HAP-1 (cell line): ENCODE measurements at regions of chrX and their contacts with region 1.

Region 1: GRCh38 chrX:117645639-117646038 is 471.0 kb downstream of the KLHL13 start:
- DNase-seq: no peak
- H3K4me3 ChIP-seq: no peak overlapping the region
- H3K4me1 ChIP-seq: no peaks in the 10 kb centered on the region
- H3K27me3 ChIP-seq: no peaks in the 10 kb centered on the region

Region 2: GRCh38 chrX:117532339-117532738 is 113.3 kb before region 1 on chrX:
- in situ Hi-C with region 1: no loop called
- DNase-seq: no peak
- H3K4me3 ChIP-seq: no peak overlapping the region
- H3K4me1 ChIP-seq: no peaks in the 10 kb centered on the region
- H3K27me3 ChIP-seq: no peaks in the 10 kb centered on the region; the same call in 1 of the 2 replicates

Region 3: DNA sequence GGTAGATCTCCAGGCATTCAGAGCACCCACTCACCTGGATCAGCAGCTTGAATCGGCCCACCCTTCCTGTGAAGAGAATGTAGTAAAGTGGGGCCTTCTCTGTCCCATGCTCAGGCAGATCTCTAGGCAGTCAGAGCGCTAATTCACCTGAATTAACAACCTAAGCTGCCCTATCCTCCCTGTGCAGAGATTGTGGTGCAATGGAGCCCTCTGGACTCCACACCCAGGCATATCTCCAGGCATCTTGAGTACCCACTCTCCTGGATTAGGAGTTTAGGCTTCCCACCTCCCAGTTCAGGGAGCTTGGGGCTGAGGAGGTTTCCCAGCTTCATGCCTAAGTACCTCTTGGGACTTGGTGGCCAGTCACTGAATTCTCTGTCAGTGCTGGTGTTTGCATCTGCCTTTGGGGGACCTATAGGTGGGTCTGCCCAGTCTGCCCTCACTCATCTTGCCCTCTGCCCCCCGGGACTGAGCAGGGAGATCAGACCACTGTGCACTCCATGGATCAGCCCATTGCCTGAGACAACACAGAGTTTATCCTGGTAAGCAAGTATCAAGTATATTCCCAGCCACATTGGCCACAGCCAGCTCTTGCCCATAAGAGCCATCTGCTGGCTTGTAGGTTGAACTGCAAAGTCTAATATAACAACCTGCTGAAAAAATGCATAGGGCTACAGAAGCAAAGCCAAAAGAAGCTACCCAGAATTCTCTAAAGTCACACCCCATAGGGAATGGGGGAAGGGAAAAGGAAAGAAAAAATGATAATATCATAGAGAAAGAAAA is 98.0 kb after region 1 on chrX:
- in situ Hi-C with region 1: loop called (anchors 25 kb)
- DNase-seq: peak; percentile 32 to 38
- H3K4me3 ChIP-seq: no peak overlapping the region
- H3K4me1 ChIP-seq: no peaks in the 10 kb centered on the region
- H3K27me3 ChIP-seq: no peaks in the 10 kb centered on the region

Region 4: GRCh38 chrX:118254611-118255010 is 609.0 kb after region 1 on chrX:
- in situ Hi-C with region 1: loop called (anchors 25 kb)
- DNase-seq: peak; percentile 77 to 87
- H3K4me3 ChIP-seq: no peak overlapping the region
- H3K4me1 ChIP-seq: peaks cover 43% of the 10 kb centered on the region
- H3K27me3 ChIP-seq: no peaks in the 10 kb centered on the region